Activated CD4-positive, alpha-beta T cell treated with anti-CD3 and anti-CD28 coated beads for 36 hours (primary cell): ENCODE measurements at regions of chr1 and their contacts with region 1.

Region 1: DNA sequence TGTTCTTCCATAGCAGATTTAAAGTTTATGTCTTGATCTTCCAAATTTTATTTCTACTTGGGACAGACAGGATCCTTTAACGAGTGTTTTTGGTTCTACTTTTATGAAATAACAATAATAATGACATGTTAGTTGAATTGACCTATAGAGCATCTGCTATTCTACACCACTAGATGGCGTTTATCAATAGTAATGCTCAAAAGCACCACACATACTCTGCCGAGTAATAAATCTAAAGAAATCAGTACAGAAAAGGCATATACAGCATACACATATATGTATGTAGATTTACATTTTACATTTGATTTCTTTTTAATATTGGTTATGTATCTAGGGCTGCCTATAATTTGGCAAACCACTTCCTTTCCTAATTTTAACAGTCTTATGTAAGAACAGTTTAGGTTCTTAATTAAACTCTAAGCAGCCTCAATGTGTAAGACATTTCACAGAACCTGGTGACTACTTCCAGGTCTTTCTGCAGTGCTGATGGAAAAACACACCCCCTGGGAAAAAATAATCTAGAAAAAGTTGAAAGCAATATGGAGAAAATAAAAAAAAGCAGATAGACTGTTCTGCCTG is 5.9 kb upstream of the SIPA1L2 start:
- DNase-seq: no peak
- ATAC-seq: peak; percentile 84
- H3K4me3 Mint-ChIP-seq: no peak overlapping the region
- H3K27ac Mint-ChIP-seq: no peak overlapping the region
- H3K4me1 Mint-ChIP-seq: peaks cover 4% of the 10 kb centered on the region
- H3K27me3 Mint-ChIP-seq: peaks cover 6% of the 10 kb centered on the region

Region 2: GRCh38 chr1:232793944-232794343 is 158.1 kb after region 1 on chr1:
- CTCF ChIA-PET with region 1: interaction called, 4 read pairs
- POLR2A ChIA-PET with region 1: no interaction called
- intact Hi-C with region 1: loop called in 1 of 2 experiments (anchors 5 kb)
- DNase-seq: peak; percentile 35
- ATAC-seq: peak; percentile 84
- H3K4me3 Mint-ChIP-seq: no peak overlapping the region
- H3K27ac Mint-ChIP-seq: no peak overlapping the region
- H3K4me1 Mint-ChIP-seq: peaks cover 14% of the 10 kb centered on the region
- H3K27me3 Mint-ChIP-seq: no peaks in the 10 kb centered on the region

Region 3: DNA sequence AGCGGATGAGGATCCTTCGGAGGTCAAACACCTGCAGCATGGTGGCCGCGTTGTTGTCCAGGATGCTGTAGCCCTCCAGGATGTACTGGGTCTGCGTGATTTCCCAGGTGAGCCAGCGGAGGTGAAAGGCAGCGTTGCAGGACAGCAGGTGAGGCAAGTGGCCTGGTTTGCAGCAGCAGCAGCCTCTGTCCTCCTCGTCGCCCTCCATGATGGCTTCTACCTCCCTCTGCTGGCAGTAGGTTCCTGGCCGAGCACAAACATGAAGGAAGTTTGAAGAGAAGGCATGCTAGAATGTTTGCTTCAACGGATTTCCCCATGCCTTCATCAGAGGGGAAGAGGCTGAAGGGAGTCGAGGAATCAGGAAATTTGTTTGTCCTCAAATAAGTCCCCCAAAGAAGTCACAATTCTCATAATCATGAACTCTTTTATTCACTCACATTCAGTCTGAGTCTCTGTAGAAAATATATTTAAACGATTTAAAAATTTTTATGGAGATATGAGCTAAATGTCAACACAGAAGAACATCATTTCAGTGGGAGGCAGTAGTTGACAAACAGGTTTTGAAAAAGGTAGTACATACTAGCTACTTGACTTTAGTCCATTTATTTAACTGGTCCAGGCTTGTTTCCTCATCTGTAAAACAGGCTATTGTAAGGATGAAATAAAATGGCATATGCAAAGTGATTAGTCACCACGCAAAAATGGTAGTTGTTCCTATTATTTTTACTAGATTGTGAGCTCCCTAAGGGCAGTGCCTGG is 389.5 kb after region 1 on chr1:
- CTCF ChIA-PET with region 1: interaction called, 3 read pairs
- POLR2A ChIA-PET with region 1: no interaction called
- intact Hi-C with region 1: loop called (anchors 5 to 10 kb)
- DNase-seq: peak; percentile 34
- ATAC-seq: no peak
- H3K4me3 Mint-ChIP-seq: no peak overlapping the region
- H3K27ac Mint-ChIP-seq: no peak overlapping the region
- H3K4me1 Mint-ChIP-seq: no peaks in the 10 kb centered on the region
- H3K27me3 Mint-ChIP-seq: no peaks in the 10 kb centered on the region

Region 4: GRCh38 chr1:233240829-233241682 is 605.2 kb after region 1 on chr1:
- CTCF ChIA-PET with region 1: no interaction called
- POLR2A ChIA-PET with region 1: no interaction called
- intact Hi-C with region 1: loop called (anchors 1 to 5 kb)
- DNase-seq: peak; percentile 56
- ATAC-seq: peak; percentile 49
- H3K4me3 Mint-ChIP-seq: no peak overlapping the region
- H3K27ac Mint-ChIP-seq: no peak overlapping the region
- H3K4me1 Mint-ChIP-seq: no peaks in the 10 kb centered on the region
- H3K27me3 Mint-ChIP-seq: no peaks in the 10 kb centered on the region